ENCODE measurements at regions of chr5 and their contacts with region 1.

Region 1: DNA sequence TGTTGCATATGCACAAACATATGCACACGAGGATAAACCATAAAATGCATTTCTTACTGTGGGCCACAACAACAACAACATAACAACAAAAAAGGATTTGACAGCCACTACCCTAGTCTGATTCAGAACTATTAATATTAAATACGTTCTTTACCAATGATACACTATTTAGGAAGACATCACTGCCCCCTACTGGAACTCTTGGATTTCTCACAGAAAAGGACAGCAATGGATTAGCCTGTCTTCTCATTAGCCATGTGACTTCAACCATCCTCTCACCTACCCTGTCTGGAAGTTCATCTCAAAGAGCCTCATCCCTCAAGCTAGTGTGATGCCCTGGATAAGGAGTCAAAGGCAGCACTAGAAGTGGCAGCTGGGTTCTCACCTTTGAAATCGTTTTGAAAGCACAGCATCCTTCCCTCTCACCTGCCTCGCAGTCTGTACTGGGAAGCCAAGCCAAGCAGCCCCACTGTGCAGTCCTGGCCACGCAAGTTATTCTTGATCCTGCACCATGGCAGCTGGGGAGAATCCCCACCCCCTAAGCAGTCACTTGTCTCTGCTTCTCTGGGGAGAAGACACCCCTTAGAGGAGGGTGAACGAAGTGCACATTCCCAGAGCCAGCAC is 64.6 kb downstream of the SH3TC2 start:
- DNase-seq: no peak
- H3K4me3 ChIP-seq: no peak overlapping the region
- H3K27ac ChIP-seq: no peak overlapping the region
- H3K4me1 ChIP-seq: peaks cover 0 to 3% of the 10 kb centered on the region in 2 donors
- H3K27me3 ChIP-seq: no peaks in the 10 kb centered on the region
- CTCF ChIP-seq: peak; percentile 62 to 70 (median 67)

Region 2: GRCh38 chr5:148443998-148444397 is 554.3 kb before region 1 on chr5:
- intact Hi-C with region 1: loop called (anchors 10 kb)
- DNase-seq: peak in 1 of 2 donors; percentile 69
- H3K4me3 ChIP-seq: no peak overlapping the region
- H3K27ac ChIP-seq: no peak overlapping the region
- H3K4me1 ChIP-seq: no peaks in the 10 kb centered on the region
- H3K27me3 ChIP-seq: no peaks in the 10 kb centered on the region
- CTCF ChIP-seq: peak; percentile 65 to 69 (median 67)

Region 3: DNA sequence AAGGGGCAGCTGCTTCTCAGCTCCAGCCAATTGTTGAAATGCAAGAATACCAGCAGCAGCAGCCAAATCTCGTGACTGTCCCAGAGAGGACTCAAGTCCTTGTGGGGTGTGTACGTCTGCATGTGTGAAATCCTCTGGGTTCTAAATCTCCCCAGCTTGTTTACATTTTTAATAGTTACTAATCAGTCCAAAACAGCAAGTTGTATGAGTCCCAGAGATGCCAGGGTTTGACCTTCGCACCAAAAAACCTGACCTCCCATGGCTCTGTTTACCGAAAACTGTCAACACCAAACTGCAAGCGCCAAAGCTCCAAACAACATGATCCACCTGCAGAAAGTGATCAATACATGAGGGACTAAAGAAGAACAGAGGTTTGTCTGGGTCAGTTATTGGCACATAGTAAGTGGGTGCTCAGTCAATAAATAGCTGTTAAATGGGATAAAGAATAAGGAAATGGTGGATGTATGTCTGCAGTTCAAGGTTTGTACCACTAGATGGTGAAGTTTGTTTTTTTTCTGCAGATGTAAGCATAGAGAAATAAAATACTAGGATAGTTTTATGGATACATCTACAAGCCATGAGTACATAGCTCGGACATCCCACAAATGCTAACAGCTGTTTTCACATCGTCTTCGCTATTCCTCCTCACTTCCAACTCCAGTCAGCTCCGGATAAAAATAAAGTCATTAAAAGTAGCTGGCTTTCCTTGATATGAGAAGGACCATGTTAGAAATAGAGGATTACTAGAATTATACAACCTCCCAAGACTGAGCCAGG is 257.1 kb before region 1 on chr5:
- intact Hi-C with region 1: loop called (anchors 1 kb)
- DNase-seq: no peak
- H3K4me3 ChIP-seq: no peak overlapping the region
- H3K27ac ChIP-seq: no peak overlapping the region
- H3K4me1 ChIP-seq: peaks cover 0 to 18% of the 10 kb centered on the region in 2 donors
- H3K27me3 ChIP-seq: no peaks in the 10 kb centered on the region
- CTCF ChIP-seq: peak; percentile 70 to 77 (median 74)

Region 4: DNA sequence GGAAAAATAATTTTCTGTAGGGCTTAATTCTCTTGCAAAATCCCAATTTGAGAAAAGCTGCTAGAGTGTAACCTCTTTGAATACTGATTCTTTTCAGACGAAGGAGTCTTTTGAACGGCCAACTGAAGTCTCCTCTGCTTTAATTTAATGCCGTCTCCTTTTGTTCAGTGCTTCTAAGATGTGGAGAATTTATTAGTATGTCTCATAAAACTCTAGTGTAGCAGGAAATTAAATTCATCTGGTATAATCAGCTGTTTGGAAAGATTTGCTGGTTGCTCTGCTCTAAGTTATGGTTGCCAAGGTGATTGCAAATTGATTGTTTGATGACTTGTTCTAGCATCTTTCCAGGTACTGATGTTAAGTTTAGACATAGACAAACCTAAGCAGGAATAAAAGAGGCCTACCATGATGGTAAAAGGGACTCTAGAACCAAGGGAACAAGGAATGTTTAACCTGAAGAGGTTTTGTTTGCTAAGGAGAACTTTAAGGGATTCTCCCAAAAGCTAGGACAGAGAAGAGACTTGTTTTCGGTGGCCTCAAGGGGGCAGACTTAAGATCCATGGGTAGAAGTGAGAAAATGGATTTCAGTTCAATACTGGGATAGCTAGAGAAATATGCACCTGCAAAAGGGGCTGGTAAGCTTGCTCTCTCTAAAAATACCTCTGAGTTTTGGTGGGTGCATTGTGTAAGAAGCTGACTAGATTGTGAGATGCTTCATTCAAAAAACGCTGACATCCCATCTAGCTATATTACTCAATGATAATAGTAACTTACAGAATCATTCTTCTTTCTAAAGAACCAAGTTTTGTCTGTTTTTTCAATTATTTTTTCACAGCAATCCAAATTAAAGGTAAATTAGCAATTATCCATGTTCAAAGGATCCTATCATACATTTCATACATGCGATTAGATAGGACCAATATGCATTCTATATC is 177.6 kb before region 1 on chr5:
- intact Hi-C with region 1: loop called (anchors 2 kb)
- DNase-seq: no peak
- H3K4me3 ChIP-seq: no peak overlapping the region
- H3K27ac ChIP-seq: no peak overlapping the region
- H3K4me1 ChIP-seq: no peaks in the 10 kb centered on the region
- H3K27me3 ChIP-seq: no peaks in the 10 kb centered on the region
- CTCF ChIP-seq: peak; percentile 19 to 47 (median 44)

Region 5: GRCh38 chr5:148826053-148826738 is 172.1 kb before region 1 on chr5 and contains the start of gene ADRB2:
- intact Hi-C with region 1: loop called (anchors 2 kb)
- DNase-seq: peak; percentile 92 to 98
- H3K4me3 ChIP-seq: peak within 1 kb of the TSS; percentile 59 to 71
- H3K27ac ChIP-seq: peak within 1 kb of the TSS; percentile 77 to 85
- H3K4me1 ChIP-seq: peaks cover 0 to 11% of the 10 kb centered on the region in 2 donors
- H3K27me3 ChIP-seq: no peaks in the 10 kb centered on the region
- CTCF ChIP-seq: no peak
- total RNA-seq, gene ADRB2: 11.2 TPM

Region 6: DNA sequence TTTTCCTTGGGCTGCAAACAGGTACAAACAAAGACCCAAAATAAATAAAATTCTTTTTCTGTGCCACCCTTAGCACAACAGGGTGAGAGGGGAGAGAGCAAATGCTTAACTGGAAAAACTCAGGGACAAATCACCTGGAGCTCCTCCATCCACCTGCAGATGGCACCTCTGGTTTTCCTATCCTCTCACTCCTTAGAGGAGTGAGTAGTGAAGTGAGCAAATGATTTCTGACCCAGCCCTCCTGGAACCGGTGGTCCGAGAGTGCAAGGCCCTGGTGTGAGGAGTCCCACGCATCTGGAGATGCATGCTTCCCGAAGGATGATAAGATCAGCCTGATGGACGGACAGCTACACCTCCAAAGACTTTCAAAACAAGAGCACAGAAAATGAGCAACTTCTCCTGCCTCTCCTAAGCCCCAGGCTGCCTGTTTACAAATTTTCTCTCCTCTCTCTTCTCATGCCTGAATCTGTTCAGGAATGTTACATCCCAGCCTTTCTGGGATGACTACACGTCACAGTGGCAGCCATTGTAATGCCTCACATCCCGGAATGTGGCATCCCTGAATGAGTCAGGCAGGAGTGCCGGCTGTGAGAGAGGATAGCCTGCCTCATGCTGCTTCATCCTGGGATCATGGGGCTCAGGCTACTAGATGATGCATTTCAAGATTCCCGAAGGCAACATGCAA is 85.4 kb before region 1 on chr5:
- intact Hi-C with region 1: loop called (anchors 2 kb)
- DNase-seq: no peak
- H3K4me3 ChIP-seq: no peak overlapping the region
- H3K27ac ChIP-seq: no peak overlapping the region
- H3K4me1 ChIP-seq: peaks cover 0 to 15% of the 10 kb centered on the region in 2 donors
- H3K27me3 ChIP-seq: no peaks in the 10 kb centered on the region
- CTCF ChIP-seq: peak in 1 of 3 experiments; percentile 29

Region 7: DNA sequence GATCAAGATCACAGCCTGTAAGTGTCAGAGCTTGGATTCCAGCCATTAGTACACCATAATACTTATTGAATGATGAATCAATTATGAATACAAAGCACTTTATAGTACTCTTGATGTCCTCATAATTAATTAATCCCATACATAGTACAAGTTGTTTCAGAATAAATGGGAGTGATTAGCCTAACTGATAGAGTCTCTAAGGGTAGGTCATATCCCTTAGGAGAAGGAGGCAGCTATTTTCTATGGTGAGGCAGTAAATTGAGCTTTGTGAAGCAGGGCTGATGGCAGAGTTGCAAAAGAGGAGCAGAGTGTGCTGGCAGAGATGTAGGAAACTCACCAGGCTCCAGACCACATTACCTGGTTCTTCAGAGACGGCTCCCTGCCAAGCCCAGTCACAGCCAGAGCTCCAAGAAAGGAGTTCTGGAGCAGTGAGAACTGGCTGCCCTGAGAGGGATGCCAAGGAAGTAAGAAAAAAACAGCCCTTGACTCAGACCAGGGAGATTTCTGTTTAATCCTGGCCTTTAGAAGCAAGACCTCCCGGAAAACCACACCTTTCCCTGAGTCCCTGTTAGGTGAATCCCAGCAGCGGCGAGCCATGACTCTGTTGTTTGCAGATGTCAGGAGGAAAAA is 48.3 kb before region 1 on chr5:
- intact Hi-C with region 1: no loop called
- DNase-seq: peak; percentile 65 to 82
- H3K4me3 ChIP-seq: no peak overlapping the region
- H3K27ac ChIP-seq: peak overlapping the region; percentile 72 to 80
- H3K4me1 ChIP-seq: peaks cover 0 to 5% of the 10 kb centered on the region in 2 donors
- H3K27me3 ChIP-seq: no peaks in the 10 kb centered on the region
- CTCF ChIP-seq: no peak

Region 8: GRCh38 chr5:149108651-149109280 is 110.5 kb after region 1 on chr5:
- intact Hi-C with region 1: no loop called
- DNase-seq: no peak
- H3K4me3 ChIP-seq: no peak overlapping the region
- H3K27ac ChIP-seq: peak overlapping the region in 1 of 2 donors; percentile 10
- H3K4me1 ChIP-seq: no peaks in the 10 kb centered on the region
- H3K27me3 ChIP-seq: no peaks in the 10 kb centered on the region
- CTCF ChIP-seq: no peak

Measured in ascending aorta (tissue), 2 donors.